AG04450 (cell line): ENCODE measurements at regions of chr1 and their contacts with region 1.

Region 1: DNA sequence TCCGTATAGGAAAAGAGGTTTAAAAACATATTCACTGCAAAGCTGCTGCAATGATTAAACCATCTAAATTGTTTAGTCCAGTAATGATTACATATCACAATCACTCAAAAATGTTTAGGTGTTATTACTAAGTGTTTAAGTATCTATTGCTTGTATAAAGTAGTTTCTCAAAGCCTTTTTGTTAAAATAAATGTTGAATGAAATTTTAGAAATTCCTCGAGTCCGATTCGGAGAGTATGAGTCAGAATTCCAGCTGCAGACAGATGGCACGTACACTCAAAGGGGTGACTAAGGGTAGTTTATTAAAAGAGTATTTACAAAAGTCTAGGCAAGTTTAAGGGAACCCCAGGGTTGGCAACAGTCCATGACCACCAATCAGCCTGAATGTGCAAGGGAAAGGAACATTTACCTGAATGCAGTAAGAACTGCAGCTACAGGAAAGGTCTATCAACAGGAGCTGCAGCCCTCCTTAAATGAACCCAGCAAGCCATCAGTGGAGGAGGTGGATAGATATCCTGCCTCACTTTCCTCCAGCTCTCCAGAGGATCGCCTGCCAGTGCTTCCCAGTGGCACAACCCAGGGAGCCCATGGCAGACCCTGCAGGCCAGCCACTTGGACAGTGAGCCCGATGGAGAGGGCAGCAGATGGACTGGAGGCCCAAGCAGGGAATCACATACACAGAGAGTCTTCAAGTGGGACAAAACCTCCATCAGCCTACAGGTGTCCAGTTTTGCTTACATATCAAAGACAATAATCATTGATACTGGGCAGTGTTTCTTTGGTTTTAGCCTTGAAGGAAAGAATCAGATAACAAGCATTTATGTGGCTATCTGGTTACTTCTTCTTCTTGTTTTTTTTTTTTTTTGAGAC is 92.1 kb upstream of the SLC44A3 start:
- DNase-seq: peak; percentile 93
- H3K4me3 ChIP-seq: no peak overlapping the region
- H3K27ac ChIP-seq: peak overlapping the region; percentile 77
- H3K27me3 ChIP-seq: no peaks in the 10 kb centered on the region
- CTCF ChIP-seq: no peak

Region 2: GRCh38 chr1:94739521-94740061 is 11.5 kb after region 1 on chr1:
- CTCF ChIA-PET with region 1: interaction called, 3 read pairs
- POLR2A ChIA-PET with region 1: interaction called, 12 read pairs
- DNase-seq: peak; percentile 83
- H3K4me3 ChIP-seq: no peak overlapping the region
- H3K27ac ChIP-seq: peak overlapping the region; percentile 91
- H3K27me3 ChIP-seq: no peaks in the 10 kb centered on the region
- CTCF ChIP-seq: no peak